Sciatic nerve (tissue), 2 donors: ENCODE measurements at regions of chr19 and their contacts with region 1.

Region 1: DNA sequence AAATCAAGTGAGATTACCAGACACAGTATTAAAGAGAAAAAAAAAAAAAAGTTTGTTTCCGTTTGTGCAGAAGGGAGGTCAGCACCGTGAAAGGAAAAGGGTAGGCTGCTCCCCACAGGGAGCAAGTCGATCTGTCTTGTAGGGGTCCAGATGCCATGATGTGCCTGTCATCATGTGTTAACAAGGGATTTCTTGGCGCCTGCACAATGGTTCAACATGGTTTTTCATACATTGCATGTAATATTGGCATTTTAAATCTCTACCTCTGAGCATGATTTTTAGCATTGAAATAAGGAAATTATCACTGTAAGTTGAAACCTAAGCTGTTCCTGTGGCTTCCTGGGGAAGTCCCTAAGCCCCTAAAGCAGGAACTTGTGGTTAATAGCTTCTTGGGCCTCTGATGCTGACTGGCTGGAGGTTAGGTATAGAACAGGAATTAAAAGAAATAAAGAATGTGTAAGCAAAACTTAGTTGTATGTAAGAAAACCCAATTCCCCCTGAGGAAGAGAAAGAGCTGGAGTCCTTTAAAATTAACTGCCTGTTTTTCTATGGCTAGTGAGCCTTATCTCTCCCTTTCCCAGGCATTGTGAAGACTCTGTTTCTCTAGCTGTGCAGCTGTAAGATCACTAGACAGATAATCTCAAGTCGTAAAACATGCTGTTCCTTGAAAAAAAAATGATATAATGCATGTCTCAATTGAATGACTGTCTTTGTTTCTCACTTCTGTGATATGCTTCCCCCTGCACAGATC is 7.4 kb upstream of the FCGBP start:
- DNase-seq: no peak
- ATAC-seq: peak; percentile 73

Region 2: DNA sequence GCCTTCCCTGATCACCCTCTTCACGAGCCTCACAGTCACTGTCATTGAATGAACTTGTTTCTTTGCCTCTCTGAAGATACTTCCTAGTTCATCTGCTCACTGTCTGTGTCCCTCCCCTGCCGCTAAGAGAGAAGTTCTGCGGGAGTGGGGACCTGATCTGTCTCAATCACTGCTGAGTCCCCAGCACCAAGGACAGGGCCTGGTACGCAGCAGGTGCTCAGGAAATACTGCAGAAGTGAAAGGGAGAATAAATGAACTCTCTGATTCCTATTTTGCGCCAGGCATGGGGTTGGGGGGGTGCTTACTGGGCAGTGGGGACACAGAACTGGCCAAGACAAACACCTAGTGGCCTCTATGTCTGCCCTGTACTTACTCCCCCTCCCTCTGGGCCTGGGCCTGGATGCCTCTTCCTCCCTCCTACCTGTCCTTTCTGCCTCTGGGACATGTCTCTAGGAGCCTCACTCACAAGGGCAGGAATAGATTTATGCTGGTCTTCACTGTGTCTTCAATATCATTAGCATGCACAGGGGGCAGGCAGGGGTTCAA is 24.9 kb before region 1 on chr19:
- intact Hi-C with region 1: loop called (anchors 1 kb)
- DNase-seq: no peak
- ATAC-seq: peak; percentile 45